Sigmoid colon (tissue), 7 donors: ENCODE measurements at regions of chr10 and their contacts with region 1.

Region 1: DNA sequence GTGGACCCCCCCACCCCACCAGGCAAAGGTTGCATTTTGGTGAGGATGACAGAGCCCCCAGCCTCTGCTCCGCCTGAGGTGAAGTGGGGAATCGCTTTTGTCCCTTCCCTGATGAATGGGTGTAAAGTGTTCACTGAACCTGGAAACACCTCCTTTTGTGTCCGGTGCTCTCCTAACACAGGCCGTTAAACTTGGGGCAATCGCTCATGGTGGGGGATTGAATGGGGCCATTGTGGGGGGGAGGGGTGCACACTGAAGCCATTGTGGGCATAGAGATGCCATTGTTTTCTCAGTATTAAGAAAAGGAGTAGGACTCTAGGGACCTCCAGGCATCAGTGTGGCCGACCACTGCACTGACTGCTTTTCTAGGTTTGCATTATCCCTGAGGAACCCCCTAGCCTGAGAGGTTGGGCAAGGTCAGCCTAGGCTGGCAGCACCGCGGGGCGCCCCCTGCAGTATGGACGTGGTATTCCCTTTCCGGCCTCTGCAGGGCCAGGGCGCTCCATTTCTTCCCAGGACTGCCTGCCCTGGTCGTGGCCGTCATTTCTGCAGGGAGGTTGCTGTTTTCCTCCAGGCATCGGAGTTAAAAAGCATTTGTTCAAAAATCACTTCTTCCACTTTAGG is 158.3 kb downstream of the TCF7L2 start:
- DNase-seq: no peak
- H3K4me3 ChIP-seq: no peak overlapping the region
- H3K27ac ChIP-seq: peak overlapping the region in 1 of 4 donors; percentile 4
- H3K4me1 ChIP-seq: peaks cover 0 to 55% (median 53%) of the 10 kb centered on the region in 4 donors
- H3K27me3 ChIP-seq: no peaks in the 10 kb centered on the region
- CTCF ChIP-seq: peak in 2 of 4 experiments; percentile 17 to 42
- EP300 ChIP-seq: no peak
- POLR2A ChIP-seq: no peak

Region 2: DNA sequence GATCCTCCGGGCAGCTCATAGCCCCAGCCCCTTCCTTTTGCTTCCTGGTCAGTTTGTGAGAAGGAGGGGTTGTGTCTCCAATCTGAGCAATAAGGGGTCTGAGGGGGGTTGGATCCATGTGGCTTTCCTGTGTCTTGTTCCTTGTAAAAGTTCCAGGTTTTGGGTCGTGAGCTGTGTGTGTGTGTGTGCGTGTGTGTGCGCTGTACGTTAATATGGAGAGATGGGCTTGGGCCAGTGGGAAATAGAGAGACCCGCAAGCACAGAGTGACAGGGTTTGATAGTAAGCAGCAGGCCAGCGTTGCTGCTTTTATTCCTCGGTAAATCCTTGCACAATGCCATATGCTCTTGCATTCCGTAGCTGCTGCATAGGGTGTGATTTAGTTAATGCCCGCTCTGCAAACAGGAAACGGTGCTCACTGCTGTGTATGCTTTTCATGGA is 49.8 kb before region 1 on chr10:
- intact Hi-C with region 1: loop called (anchors 5 kb)
- DNase-seq: peak; percentile 64
- H3K4me3 ChIP-seq: peak overlapping the region in 3 of 4 donors; percentile 16 to 34 (median 24)
- H3K27ac ChIP-seq: peak overlapping the region; percentile 61 to 80 (median 68)
- H3K4me1 ChIP-seq: peaks cover 0 to 87% (median 86%) of the 10 kb centered on the region in 4 donors
- H3K27me3 ChIP-seq: no peaks in the 10 kb centered on the region
- CTCF ChIP-seq: no peak
- EP300 ChIP-seq: peak in 1 of 4 donors; percentile 42
- POLR2A ChIP-seq: no peak